Breast epithelium (tissue), 4 donors: ENCODE measurements at regions of chr17 and their contacts with region 1.

Region 1: DNA sequence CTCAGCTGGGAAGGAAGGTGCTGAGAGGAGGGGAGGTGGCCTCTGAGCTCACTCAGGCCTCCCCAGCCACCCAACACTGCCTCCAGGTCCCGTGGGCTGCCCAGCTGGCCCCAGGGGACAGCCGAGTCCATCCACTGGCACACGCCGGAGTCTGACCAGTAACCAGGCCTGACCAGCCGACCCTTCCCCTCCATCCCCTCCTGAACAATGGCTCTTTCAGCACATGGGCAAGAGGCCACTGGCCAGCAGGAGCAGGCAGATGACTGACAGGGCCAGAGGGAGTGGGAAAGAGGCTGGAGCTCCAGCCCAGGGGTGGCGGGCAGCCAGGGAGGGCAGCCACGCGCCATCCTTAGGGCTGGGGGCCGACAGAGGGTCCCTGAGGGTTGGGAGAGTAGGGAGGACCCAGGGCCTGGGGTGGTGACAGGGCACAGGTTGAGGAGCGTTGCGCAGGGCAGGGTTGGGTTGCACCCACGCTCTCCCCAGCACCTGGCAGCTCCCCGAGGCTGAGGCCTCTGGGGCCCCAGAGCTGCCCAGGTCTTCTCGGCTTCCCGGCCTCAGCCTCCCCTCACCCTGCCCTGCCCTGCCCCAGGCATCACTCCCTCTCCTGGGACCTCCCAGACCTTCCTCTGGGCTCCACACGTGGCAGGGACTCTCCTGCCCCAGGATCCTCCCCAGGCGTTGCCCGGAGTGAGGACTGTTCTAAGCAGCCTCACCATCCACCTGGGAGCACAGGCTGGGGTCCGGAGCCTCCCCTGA is 20.2 kb upstream of the SLC38A10 start:
- DNase-seq: no peak
- H3K4me3 ChIP-seq: no peak overlapping the region
- H3K27ac ChIP-seq: no peak overlapping the region
- H3K4me1 ChIP-seq: peaks cover under 1 to 2% of the 10 kb centered on the region in 2 donors
- H3K27me3 ChIP-seq: no peaks in the 10 kb centered on the region
- CTCF ChIP-seq: no peak
- POLR2A ChIP-seq: no peak

Region 2: DNA sequence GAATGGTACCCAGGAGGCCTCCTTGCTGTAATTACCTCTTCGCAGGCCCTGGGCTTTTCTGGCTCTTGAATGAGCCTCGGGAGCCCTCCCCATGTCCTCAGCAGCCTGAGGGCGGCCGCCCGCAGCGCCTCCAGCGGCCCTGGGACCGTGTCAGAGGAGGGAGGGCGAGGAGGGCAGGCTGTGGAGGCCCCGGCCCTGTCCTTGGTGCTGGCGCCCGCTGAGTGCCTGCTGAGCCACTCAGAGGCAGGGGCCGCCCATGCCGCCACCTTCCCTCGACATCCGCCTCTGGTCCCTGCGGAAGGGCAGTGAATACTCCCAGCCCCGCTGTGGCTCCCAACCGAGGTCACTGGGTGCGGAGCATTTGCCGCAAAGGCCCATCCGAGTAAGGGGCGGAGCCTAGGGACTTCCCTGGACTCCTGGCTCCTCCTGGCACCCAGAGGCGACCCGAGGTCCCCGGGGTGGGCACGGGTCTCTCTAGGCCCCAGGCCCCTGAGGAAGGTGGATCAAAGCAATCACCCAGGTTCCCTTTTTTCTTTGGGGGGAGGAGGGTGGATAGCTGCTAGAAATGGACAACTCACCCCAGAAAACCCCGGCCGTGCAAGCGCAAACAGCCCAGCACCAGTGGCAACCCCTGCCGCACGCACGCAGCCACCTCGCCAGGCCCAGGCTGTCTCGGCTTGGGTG is 1707.2 kb before region 1 on chr17:
- intact Hi-C with region 1: no loop called
- DNase-seq: no peak
- H3K4me3 ChIP-seq: no peak overlapping the region
- H3K27ac ChIP-seq: no peak overlapping the region
- H3K4me1 ChIP-seq: no peaks in the 10 kb centered on the region
- H3K27me3 ChIP-seq: peaks cover 13 to 97% of the 10 kb centered on the region in 2 donors
- CTCF ChIP-seq: no peak
- POLR2A ChIP-seq: no peak

Region 3: DNA sequence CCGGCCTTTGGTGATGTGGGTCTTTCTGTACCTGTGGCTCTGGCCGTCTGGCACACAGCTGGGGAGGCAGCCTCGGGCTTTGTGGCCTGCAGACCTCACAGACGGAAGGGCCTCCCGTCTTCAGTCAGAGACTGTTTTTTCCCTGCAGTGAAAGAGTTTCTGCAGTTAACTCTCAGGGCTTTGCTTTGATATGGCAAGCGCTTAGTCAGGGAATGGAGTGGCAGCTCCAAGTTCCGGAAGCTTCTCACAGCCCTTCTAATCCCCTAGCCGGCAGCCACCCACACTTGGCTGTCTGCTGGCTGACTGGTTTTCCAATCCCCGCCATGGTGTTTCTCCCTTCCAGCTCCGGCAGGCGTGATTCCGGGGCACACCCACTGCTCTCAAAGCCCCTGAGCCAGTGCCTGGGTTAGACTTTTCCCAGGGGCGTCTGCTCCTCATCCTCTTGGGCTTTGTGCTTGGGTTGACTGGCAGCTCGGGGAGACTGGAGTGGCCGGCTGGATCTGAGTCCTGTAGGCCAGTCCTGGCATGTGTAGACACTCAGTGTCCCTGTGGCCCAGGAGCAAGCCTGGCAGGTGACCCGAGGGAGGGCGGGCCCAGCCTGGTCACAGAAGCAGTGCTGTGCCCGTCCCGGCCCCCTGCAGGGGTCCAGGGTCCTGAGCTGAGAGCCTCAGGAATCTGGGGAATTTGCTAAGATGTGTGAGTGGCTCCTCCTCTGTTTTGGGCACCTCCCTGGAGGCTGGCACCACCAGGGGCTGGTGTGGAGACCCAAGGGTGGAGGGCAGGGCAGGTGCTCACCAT is 250.4 kb before region 1 on chr17:
- intact Hi-C with region 1: no loop called
- DNase-seq: no peak
- H3K4me3 ChIP-seq: peak overlapping the region in 1 of 3 donors; percentile 15
- H3K27ac ChIP-seq: peak overlapping the region; percentile 64 to 71
- H3K4me1 ChIP-seq: peaks cover 15 to 26% of the 10 kb centered on the region in 2 donors
- H3K27me3 ChIP-seq: no peaks in the 10 kb centered on the region
- CTCF ChIP-seq: no peak
- POLR2A ChIP-seq: no peak

Region 4: DNA sequence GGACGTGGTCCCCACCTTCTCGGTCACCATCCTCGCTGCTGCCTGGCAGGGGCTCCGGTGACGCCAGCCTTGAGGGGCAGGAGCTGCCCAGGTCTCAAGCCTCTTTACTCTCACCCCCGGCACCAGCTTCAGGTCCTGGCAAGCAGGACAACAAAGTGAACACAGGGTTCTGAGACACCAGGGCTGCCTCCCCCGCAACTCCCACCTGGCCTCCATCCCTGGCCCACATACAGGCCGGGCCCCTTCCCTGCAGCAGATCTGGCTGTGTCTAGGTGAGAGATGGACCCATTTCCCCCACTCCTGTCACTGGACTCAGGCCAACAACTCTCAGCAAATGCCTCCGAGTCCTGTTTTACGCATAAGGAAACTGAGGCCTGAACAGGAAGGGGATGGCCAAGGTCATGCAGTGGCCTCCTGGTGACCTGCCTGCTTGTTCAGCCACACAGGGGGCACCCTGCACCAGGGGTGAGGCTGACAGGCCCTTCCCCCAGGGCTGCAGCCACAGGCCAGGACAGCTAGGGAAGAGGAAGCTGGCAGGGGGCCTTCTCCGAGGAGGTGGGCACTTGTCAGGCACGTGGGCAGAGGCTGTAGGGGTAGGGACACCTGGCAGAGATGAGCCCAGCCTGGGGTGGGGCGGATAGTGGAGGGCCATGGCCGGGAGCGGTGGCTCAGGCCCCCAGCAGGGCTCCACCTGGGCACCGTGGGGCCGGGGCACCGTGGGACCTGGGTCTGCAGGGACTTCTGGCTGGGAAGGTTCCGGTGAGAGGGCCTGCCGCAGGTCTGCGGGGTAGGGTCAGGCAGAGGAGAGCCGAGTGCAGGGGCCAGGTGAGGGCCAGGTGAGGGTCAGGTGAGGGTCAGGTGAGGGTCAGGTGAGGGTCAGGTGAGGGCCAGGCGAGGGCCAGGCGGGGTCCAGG is 196.7 kb before region 1 on chr17:
- intact Hi-C with region 1: no loop called
- DNase-seq: no peak
- H3K4me3 ChIP-seq: peak overlapping the region in 2 of 3 donors; percentile 58 to 65
- H3K27ac ChIP-seq: peak overlapping the region; percentile 38 to 78
- H3K4me1 ChIP-seq: peaks cover 0 to 4% of the 10 kb centered on the region in 2 donors
- H3K27me3 ChIP-seq: peaks cover 0 to under 1% of the 10 kb centered on the region in 2 donors
- CTCF ChIP-seq: no peak
- POLR2A ChIP-seq: no peak

Region 5: DNA sequence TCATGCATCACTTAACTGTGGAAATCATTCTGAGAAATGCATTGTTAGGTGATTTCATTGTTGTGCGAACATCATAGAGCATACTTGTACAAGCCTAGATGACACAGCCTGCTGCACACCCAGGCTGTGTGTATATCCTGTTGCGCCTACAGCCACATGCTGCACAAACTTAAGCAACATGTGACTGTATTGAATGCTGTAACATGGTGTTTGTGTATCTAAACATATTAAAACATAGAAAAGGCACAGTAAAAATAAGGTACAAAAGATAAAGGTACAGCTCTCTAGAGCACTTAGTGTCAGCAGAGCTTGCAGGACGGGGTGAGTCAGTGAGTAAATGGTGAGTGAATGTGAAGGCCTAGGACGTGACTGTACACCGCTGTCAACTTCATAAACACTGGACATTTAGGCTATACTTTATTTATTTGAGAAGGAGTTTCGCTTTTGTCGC is 1216.1 kb after region 1 on chr17:
- intact Hi-C with region 1: loop called (anchors 5 kb)
- DNase-seq: no peak
- H3K4me3 ChIP-seq: no peak overlapping the region
- H3K27ac ChIP-seq: peak overlapping the region in 1 of 2 donors; percentile 15
- H3K4me1 ChIP-seq: peaks cover 0 to 23% of the 10 kb centered on the region in 2 donors
- H3K27me3 ChIP-seq: no peaks in the 10 kb centered on the region
- CTCF ChIP-seq: no peak
- POLR2A ChIP-seq: no peak